Activated CD4-positive, alpha-beta T cell treated with anti-CD3 and anti-CD28 coated beads, Interleukin-2, amount 10 ng/mL, durations not matched to agents 7 days and 5 days (primary cell): ENCODE measurements at regions of chr22 and their contacts with region 1.

Region 1: DNA sequence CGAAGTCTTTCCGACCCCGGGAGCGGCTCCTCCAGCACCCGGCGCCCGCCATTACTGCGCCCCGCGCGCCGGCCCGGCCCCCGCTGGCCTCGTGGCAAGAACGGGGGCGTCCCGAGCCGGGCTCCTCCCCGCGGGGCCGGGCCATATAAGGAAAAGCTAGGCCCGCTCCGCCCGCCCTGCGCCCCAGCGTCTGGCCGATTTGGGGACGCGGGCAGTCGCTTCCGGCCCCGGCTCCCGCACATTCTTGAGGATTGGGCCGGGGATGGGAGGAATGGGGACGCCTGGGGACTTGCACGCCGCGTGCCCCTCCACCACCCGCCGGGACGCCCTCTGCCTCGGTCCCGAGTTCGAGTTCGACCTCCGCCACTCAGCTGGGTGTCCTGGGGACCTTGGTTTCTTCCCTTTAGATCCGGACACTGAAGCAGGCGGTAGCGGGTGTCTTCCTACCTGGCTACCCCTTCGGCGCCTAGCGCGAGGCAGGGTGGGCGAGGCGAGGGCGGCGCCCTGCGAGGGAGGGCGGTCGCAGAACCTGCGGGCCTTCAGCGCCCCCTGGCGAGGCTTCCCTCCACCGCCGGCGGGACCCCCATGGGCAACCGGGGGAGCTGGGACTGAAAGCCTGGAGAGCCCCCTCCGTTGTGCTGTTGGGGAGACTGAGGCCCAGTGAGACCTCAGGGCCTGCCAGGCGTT is 3.8 kb downstream of the SMTN start:
- DNase-seq: peak; percentile 89
- H3K4me3 Mint-ChIP-seq: peak overlapping the region; percentile 76
- H3K27ac Mint-ChIP-seq: peak overlapping the region; percentile 86
- H3K4me1 Mint-ChIP-seq: peaks cover 35% of the 10 kb centered on the region
- H3K27me3 Mint-ChIP-seq: no peaks in the 10 kb centered on the region

Region 2: GRCh38 chr22:30968924-30969539 is 115.9 kb before region 1 on chr22 and contains the start of gene TUG1:
- CTCF ChIA-PET with region 1: interaction called, 11 read pairs
- POLR2A ChIA-PET with region 1: interaction called, 3 read pairs
- DNase-seq: peak; percentile 98
- H3K4me3 Mint-ChIP-seq: peak within 1 kb of the TSS; percentile 91
- H3K27ac Mint-ChIP-seq: peak within 1 kb of the TSS; percentile 98
- H3K4me1 Mint-ChIP-seq: peaks cover 64% of the 10 kb centered on the region
- H3K27me3 Mint-ChIP-seq: no peaks in the 10 kb centered on the region
- total RNA-seq, gene TUG1: 84.8 to 98.2 TPM

Region 3: GRCh38 chr22:31005535-31005934 is 79.4 kb before region 1 on chr22:
- CTCF ChIA-PET with region 1: no interaction called
- POLR2A ChIA-PET with region 1: no interaction called
- DNase-seq: no peak
- H3K4me3 Mint-ChIP-seq: no peak overlapping the region
- H3K27ac Mint-ChIP-seq: no peak overlapping the region
- H3K4me1 Mint-ChIP-seq: no peaks in the 10 kb centered on the region
- H3K27me3 Mint-ChIP-seq: no peaks in the 10 kb centered on the region

Region 4: DNA sequence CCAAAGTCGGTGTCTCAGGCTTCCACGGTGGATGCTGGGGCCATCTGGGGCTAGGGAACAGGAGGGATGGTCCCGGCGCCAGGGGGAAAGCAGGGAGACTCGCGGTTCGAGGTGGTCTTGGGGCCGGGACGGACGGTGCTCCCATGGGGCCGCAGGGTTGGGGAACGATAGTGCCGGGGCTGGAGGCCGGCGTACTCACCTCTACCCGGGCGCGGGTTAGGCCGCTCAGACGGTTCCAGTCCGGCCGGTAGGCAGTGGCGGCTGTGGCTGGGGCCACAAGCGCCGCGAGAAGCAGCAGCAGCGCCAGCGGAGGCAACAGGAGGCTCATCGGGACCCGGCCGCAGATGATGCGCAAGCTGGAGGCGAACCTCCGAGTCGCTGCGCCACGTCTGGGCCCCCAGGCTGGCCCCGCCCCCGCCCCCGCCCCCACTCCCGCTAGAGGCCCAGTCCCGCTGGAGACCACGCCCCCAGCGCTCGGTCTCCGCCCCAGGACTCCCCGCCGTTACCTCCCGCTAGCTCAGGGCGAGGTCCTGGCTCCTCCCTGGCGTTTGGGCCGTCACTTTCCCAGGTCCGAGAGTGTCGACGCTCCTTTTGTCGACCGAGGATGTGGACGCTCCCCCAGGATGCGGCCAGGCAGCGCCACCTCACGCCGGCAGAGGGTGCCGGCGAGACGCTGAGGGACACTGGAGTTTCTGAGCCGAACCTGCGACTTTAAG is 22.4 kb after region 1 on chr22 and contains the start of gene SELENOM:
- CTCF ChIA-PET with region 1: interaction called, 10 read pairs
- POLR2A ChIA-PET with region 1: no interaction called
- DNase-seq: peak; percentile 87
- H3K4me3 Mint-ChIP-seq: peak within 1 kb of the TSS; percentile 77
- H3K27ac Mint-ChIP-seq: peak within 1 kb of the TSS; percentile 65
- H3K4me1 Mint-ChIP-seq: peaks cover 9% of the 10 kb centered on the region
- H3K27me3 Mint-ChIP-seq: no peaks in the 10 kb centered on the region
- total RNA-seq, gene SELENOM: 2.1 to 2.2 TPM